Esophagus squamous epithelium (tissue), 5 donors: ENCODE measurements at regions of chr3 and their contacts with region 1.

Region 1: DNA sequence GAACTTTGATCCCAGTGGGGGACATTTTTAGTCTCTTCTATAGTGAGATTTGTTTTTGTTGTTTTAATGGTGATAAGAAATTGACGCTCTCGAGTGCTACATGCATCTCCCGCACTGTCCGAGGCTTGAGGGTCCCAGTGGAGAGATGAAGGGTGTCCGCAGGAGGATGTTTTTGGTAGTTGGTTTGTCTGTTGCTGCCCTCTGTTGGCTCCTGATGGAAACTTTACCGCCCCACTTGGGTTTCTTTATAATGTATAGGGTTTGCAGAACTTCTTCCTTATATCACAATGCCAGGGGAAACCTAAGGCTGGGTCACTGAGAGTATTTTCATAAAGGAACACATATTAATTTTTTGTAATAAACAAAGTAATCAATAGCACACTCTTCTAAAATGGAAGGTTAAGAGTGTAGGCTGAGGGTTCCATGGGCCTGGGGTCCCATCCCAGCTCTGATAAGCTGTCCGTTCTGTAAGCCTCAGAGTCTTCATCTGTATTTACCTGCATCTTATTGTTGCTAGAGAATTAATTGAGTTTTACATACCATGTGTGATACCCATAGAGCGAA is 185.3 kb upstream of the FEZF2 start:
- DNase-seq: no peak
- H3K4me3 ChIP-seq: no peak overlapping the region
- H3K27ac ChIP-seq: no peak overlapping the region
- H3K4me1 ChIP-seq: no peaks in the 10 kb centered on the region
- H3K27me3 ChIP-seq: no peaks in the 10 kb centered on the region
- CTCF ChIP-seq: peak in 4 of 6 experiments; percentile 12 to 45 (median 24)
- POLR2A ChIP-seq: no peak

Region 2: DNA sequence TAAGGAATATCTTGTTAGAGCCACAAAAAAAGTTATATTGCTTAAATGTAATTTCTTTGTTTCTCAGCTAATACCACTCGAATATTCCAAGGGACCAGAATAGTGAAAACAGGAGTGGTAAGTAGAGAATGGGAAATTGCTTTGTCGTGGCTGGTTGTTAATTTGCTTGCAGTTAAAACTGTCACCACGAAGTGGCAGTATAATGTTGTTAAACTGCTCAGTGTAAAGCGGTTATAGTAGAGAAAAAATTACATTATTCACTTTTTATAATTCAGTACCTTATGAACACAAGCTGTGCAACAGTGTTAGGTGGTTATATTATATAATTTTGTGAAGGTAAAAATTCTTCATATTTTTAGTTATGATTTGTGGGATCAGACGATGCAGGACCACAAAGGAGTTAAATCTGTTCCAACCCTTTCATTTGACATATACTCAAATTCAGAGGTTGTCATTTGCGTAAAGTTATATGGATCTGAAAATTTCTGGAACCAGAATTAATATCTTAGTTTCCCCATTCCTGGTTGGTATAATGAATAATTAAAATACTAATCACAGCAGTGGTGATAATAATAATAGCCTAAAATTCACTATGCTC is 357.1 kb before region 1 on chr3:
- intact Hi-C with region 1: loop called (anchors 10 kb)
- DNase-seq: no peak
- H3K4me3 ChIP-seq: no peak overlapping the region
- H3K27ac ChIP-seq: no peak overlapping the region
- H3K4me1 ChIP-seq: no peaks in the 10 kb centered on the region
- H3K27me3 ChIP-seq: no peaks in the 10 kb centered on the region
- CTCF ChIP-seq: peak in 4 of 6 experiments; percentile 41 to 71 (median 48)
- POLR2A ChIP-seq: no peak

Region 3: DNA sequence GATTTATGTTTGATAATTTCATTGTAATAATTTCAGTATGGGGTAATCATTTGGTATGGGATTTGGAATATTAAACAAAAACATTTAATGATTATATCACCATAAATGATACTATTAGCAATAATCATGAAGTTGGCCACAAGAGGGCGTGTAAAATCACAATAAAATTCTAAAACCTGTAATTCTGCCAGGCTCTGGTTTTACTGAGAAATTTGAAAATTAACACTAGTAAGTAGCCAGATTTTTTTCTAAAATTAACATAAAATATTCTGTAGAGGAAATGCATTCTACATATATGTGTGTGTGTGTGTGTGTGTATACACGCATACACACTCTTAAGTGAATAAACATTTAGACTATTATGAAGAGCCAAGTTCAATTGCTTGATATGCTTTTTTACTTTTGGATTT is 225.8 kb before region 1 on chr3:
- intact Hi-C with region 1: loop called (anchors 5 kb)
- DNase-seq: no peak
- H3K4me3 ChIP-seq: no peak overlapping the region
- H3K27ac ChIP-seq: no peak overlapping the region
- H3K4me1 ChIP-seq: no peaks in the 10 kb centered on the region
- H3K27me3 ChIP-seq: no peaks in the 10 kb centered on the region
- CTCF ChIP-seq: peak; percentile 14 to 48 (median 40)
- POLR2A ChIP-seq: no peak